SK-N-SH (cell line): ENCODE measurements at regions of chr9 and their contacts with region 1.

Region 1: GRCh38 chr9:34403554-34404380 is 27.1 kb upstream of the MYORG start:
- DNase-seq: peak; percentile 78
- H3K4me3 ChIP-seq: peak overlapping the region in 1 of 2 experiments; percentile 44; a peak in 1 of 4 replicates
- H3K27ac ChIP-seq: no peak overlapping the region
- H3K4me1 ChIP-seq: peaks cover 0 to 12% of the 10 kb centered on the region in 2 experiments; a peak in 1 of 4 replicates
- H3K27me3 ChIP-seq: no peaks in the 10 kb centered on the region
- CTCF ChIP-seq: peak; percentile 99
- EP300 ChIP-seq: no peak
- RAD21 ChIP-seq: peak; percentile 99

Region 2: GRCh38 chr9:34233672-34234071 is 170.1 kb before region 1 on chr9:
- CTCF ChIA-PET with region 1: no interaction called
- POLR2A ChIA-PET with region 1: no interaction called
- DNase-seq: no peak
- H3K4me3 ChIP-seq: no peak overlapping the region
- H3K27ac ChIP-seq: no peak overlapping the region
- H3K4me1 ChIP-seq: no peaks in the 10 kb centered on the region
- H3K27me3 ChIP-seq: no peaks in the 10 kb centered on the region
- CTCF ChIP-seq: no peak
- EP300 ChIP-seq: no peak
- RAD21 ChIP-seq: no peak

Region 3: DNA sequence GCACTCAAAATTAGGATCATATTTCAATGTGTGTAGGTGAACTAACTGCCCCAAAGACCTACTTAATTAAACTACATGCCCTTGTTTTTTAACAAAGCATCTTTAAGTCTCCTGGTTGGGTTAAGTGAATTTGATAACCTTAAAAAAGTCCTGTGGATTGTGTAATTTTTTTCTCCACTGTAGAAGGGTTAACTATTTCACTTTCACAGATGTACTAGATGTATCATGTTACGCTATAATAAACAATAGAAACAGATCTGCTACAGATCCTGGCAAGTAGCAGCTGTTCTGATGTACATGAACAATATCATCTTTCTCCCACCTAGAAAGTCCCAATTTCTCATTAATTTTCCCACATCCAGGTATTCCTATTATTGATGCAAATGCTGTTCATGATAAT is 93.6 kb before region 1 on chr9:
- CTCF ChIA-PET with region 1: no interaction called
- POLR2A ChIA-PET with region 1: no interaction called
- DNase-seq: no peak
- H3K4me3 ChIP-seq: no peak overlapping the region
- H3K27ac ChIP-seq: no peak overlapping the region
- H3K4me1 ChIP-seq: peaks cover 3 to 7% of the 10 kb centered on the region in 2 experiments; a peak in 3 of 4 replicates
- H3K27me3 ChIP-seq: no peaks in the 10 kb centered on the region
- CTCF ChIP-seq: no peak
- EP300 ChIP-seq: no peak
- RAD21 ChIP-seq: no peak

Region 4: GRCh38 chr9:34387239-34387638 is 16.5 kb before region 1 on chr9:
- CTCF ChIA-PET with region 1: interaction called, 36 read pairs
- POLR2A ChIA-PET with region 1: no interaction called
- DNase-seq: no peak
- H3K4me3 ChIP-seq: no peak overlapping the region
- H3K27ac ChIP-seq: no peak overlapping the region
- H3K4me1 ChIP-seq: no peaks in the 10 kb centered on the region
- H3K27me3 ChIP-seq: no peaks in the 10 kb centered on the region
- CTCF ChIP-seq: no peak
- EP300 ChIP-seq: no peak
- RAD21 ChIP-seq: no peak

Region 5: DNA sequence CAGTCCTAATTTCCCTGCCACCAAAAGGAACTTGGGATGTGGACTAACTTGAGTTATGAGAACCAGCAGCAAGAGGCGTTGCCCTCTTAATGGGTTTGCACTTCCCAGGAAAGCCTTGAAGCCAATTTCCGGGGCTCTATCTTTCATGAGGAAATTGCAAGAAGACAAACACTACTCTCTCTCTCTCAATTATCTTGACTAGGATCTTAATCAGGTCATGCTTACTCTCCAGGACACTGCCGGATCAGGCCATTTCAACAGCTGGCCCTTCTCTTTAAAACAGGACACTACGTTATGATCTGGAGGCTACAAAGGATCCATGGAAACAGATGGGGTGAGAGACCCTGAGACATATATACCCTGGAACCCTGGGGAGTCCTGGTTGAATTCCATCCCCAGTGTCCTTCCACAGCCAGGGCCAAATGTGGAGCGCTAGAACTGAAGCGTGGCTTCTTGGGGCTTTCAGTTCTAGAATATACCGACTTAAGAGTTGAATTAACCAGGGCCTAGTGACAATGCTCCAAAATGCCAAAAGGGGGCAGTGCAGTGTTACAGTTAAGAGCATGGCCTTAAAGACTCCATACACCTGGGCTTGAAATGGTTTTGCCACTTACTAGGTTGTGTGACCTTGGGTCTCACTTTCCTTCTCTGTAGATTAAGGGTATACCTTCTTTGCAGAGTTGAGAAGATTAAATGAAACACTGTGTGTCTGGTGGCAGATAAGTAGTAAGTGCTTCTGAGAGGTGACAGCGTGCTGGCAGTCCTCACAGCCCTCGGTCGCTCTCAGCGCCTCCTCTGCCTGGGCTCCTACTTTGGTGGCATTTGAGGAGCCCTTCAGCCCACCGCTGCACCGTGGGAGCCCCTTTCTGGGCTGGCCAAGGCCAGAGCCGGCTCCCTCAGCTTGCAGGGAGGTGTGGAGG is 33.5 kb after region 1 on chr9:
- CTCF ChIA-PET with region 1: interaction called, 132 read pairs
- POLR2A ChIA-PET with region 1: no interaction called
- DNase-seq: peak; percentile 74
- H3K4me3 ChIP-seq: no peak overlapping the region
- H3K27ac ChIP-seq: peak overlapping the region in 1 of 2 experiments; percentile 59; a peak in 2 of 4 replicates
- H3K4me1 ChIP-seq: peaks cover 12 to 21% of the 10 kb centered on the region in 2 experiments; a peak in 3 of 4 replicates
- H3K27me3 ChIP-seq: no peaks in the 10 kb centered on the region
- CTCF ChIP-seq: peak; percentile 92
- EP300 ChIP-seq: no peak
- RAD21 ChIP-seq: peak; percentile 94

Region 6: DNA sequence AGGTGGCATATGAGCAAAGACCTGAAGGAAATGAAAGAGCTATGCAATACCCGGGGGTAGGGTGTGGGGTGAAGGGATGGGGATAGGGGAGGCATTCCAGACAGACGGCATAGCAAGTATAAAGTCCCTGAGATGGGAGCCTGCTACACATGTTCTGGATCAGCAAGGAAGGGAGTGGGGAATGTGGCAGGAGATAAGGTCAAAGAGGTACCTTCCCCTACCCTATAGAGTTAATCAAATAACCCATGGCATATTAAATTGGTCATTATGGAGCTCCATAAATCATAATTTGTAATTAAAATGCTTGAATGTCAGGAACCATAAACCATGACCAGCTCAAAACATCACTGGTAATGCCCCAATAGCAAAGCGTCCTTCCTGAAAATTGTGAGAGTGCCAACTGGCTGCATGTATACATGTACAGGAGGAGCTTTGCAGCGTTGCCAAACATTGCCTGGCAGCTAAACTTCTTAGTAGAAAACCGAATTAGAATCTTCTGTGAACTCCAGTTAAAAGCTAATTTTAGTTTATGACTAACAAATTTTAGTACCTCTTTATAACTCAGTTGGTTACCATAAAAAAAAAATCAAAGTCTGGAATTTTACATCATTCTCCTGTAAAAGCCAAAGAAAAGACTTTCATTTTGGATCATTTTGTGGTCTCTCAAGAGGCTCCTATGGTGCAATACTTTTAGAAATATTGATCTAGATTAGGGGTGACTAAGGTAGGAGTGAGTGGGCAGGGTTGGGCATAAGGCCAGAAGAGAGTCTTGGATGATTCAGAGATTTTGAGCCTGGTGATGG is 59.5 kb after region 1 on chr9:
- CTCF ChIA-PET with region 1: interaction called, 28 read pairs
- POLR2A ChIA-PET with region 1: no interaction called
- DNase-seq: peak; percentile 52
- H3K4me3 ChIP-seq: 0 out of 4 replicates have a peak overlapping the region, but pooled peaks of 1 of the 2 experiments have one; percentile 1
- H3K27ac ChIP-seq: peak overlapping the region; percentile 7 to 60; a peak in 3 of 4 replicates
- H3K4me1 ChIP-seq: peaks cover 7 to 23% of the 10 kb centered on the region in 2 experiments; a peak in 3 of 4 replicates
- H3K27me3 ChIP-seq: no peaks in the 10 kb centered on the region
- CTCF ChIP-seq: no peak
- EP300 ChIP-seq: peak; percentile 22 to 40; a peak in 2 of 4 replicates
- RAD21 ChIP-seq: no peak

Region 7: DNA sequence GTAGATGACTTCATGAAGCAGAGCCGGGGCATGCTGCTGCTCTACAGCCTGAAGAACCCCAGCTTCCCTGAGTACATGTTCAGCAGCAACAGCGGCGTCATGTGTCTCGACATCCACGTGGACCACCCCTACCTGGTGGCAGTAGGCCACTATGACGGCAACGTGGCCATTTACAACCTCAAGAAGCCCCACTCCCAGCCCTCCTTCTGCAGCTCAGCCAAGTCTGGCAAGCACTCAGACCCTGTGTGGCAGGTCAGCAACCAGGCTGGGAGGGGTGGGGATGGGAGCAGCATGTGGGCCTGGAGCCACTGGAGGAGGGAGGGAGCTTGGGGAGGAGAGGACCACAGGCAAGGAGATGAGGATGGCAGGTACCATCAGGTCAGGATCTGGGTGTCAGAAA is 102.9 kb after region 1 on chr9:
- CTCF ChIA-PET with region 1: interaction called, 155 read pairs
- POLR2A ChIA-PET with region 1: no interaction called
- DNase-seq: no peak
- H3K4me3 ChIP-seq: no peak overlapping the region
- H3K27ac ChIP-seq: no peak overlapping the region
- H3K4me1 ChIP-seq: peaks cover 0 to 6% of the 10 kb centered on the region in 2 experiments; a peak in 1 of 4 replicates
- H3K27me3 ChIP-seq: no peaks in the 10 kb centered on the region; the same call in 1 of the 2 replicates
- CTCF ChIP-seq: no peak
- EP300 ChIP-seq: no peak
- RAD21 ChIP-seq: no peak

Region 8: DNA sequence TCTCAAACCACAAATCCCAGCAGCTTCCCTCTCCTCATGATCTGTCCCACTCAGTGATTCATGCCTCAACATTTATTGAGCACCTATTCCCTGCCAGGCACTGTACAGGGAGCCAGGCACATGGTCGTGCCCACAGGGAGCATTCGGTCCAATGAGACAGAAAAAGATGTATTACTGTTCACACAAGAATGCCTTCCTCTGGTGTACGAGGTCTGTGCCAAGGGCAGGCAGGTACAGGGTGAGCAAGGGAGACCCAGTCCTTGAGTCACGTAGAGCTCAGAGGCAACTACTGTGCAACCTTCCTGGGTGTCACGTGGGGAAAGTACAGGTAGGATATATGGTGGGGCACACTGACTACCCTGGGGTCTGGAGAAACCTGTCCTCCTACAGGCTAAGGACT is 181.2 kb after region 1 on chr9:
- CTCF ChIA-PET with region 1: interaction called, 10 read pairs
- POLR2A ChIA-PET with region 1: no interaction called
- DNase-seq: no peak
- H3K4me3 ChIP-seq: no peak overlapping the region
- H3K27ac ChIP-seq: no peak overlapping the region; a peak in 1 of 4 replicates
- H3K4me1 ChIP-seq: peaks cover 0 to 79% of the 10 kb centered on the region in 2 experiments; a peak in 2 of 4 replicates
- H3K27me3 ChIP-seq: peaks cover 57% of the 10 kb centered on the region
- CTCF ChIP-seq: no peak
- EP300 ChIP-seq: no peak
- RAD21 ChIP-seq: no peak